Activated naive CD4-positive, alpha-beta T cell treated with anti-CD3 and anti-CD28 coated beads for 36 hours (primary cell): ENCODE measurements at regions of chr2 and their contacts with region 1.

Region 1: GRCh38 chr2:162013514-162014475 is 60.2 kb downstream of the DPP4 start:
- DNase-seq: peak; percentile 31
- H3K4me3 Mint-ChIP-seq: peak overlapping the region; percentile 70
- H3K27ac Mint-ChIP-seq: peak overlapping the region; percentile 95
- H3K4me1 Mint-ChIP-seq: peaks cover 63% of the 10 kb centered on the region
- H3K27me3 Mint-ChIP-seq: no peaks in the 10 kb centered on the region

Region 2: GRCh38 chr2:161308178-161308955 is 705.4 kb before region 1 on chr2 and contains the start of gene PSMD14:
- CTCF ChIA-PET with region 1: no interaction called
- intact Hi-C with region 1: loop called (anchors 5 kb)
- DNase-seq: peak; percentile 96
- H3K4me3 Mint-ChIP-seq: peak within 1 kb of the TSS; percentile 86
- H3K27ac Mint-ChIP-seq: peak within 1 kb of the TSS; percentile 91
- H3K4me1 Mint-ChIP-seq: peaks cover 35% of the 10 kb centered on the region
- H3K27me3 Mint-ChIP-seq: no peaks in the 10 kb centered on the region
- total RNA-seq, gene PSMD14: 76.2 to 79.4 TPM

Region 3: DNA sequence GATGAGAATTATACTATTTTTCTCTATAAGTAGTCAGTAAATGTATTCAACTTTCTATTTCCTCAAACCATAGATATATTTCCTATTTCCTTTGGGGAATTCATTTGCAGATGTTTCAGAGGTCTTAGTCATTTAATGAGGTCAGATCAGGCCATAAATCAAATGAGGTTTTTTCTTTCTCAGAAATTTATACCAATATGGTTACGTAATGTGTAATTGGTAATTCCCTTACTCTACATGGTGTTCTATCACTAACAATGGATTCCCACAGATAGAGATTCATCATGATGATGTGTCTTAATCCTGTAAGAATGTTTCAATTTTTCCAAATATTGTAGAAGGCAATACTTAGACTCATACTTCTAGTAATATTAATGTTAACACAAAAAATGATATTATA is 47.8 kb before region 1 on chr2:
- CTCF ChIA-PET with region 1: no interaction called
- intact Hi-C with region 1: loop called (anchors 1 kb)
- DNase-seq: no peak
- H3K4me3 Mint-ChIP-seq: no peak overlapping the region
- H3K27ac Mint-ChIP-seq: no peak overlapping the region
- H3K4me1 Mint-ChIP-seq: peaks cover 28% of the 10 kb centered on the region
- H3K27me3 Mint-ChIP-seq: no peaks in the 10 kb centered on the region

Region 4: GRCh38 chr2:161976295-161976694 is 37.5 kb before region 1 on chr2:
- CTCF ChIA-PET with region 1: no interaction called
- intact Hi-C with region 1: no loop called
- DNase-seq: no peak
- H3K4me3 Mint-ChIP-seq: no peak overlapping the region
- H3K27ac Mint-ChIP-seq: no peak overlapping the region
- H3K4me1 Mint-ChIP-seq: peaks cover 50% of the 10 kb centered on the region
- H3K27me3 Mint-ChIP-seq: no peaks in the 10 kb centered on the region

Region 5: GRCh38 chr2:161992526-161992925 is 21.3 kb before region 1 on chr2:
- CTCF ChIA-PET with region 1: interaction called, 3 read pairs
- intact Hi-C with region 1: loop called (anchors 1 kb)
- DNase-seq: peak; percentile 80
- H3K4me3 Mint-ChIP-seq: peak overlapping the region; percentile 78
- H3K27ac Mint-ChIP-seq: peak overlapping the region; percentile 97
- H3K4me1 Mint-ChIP-seq: peaks cover 49% of the 10 kb centered on the region
- H3K27me3 Mint-ChIP-seq: no peaks in the 10 kb centered on the region

Region 6: GRCh38 chr2:162025121-162026031 is 11.6 kb after region 1 on chr2:
- CTCF ChIA-PET with region 1: interaction called, 4 read pairs
- intact Hi-C with region 1: loop called (anchors 1 kb)
- DNase-seq: peak; percentile 32
- H3K4me3 Mint-ChIP-seq: no peak overlapping the region
- H3K27ac Mint-ChIP-seq: no peak overlapping the region
- H3K4me1 Mint-ChIP-seq: peaks cover 63% of the 10 kb centered on the region
- H3K27me3 Mint-ChIP-seq: no peaks in the 10 kb centered on the region

Region 7: GRCh38 chr2:162073888-162074645 is 60.3 kb after region 1 on chr2 and contains the start of gene DPP4:
- CTCF ChIA-PET with region 1: interaction called, 6 read pairs
- intact Hi-C with region 1: loop called (anchors 1 kb)
- DNase-seq: peak; percentile 60
- H3K4me3 Mint-ChIP-seq: peak within 1 kb of the TSS; percentile 94
- H3K27ac Mint-ChIP-seq: peak within 1 kb of the TSS; percentile 79
- H3K4me1 Mint-ChIP-seq: peaks cover 48% of the 10 kb centered on the region
- H3K27me3 Mint-ChIP-seq: no peaks in the 10 kb centered on the region
- total RNA-seq, gene DPP4: 11.9 to 12.9 TPM

Region 8: GRCh38 chr2:162301151-162301804 is 287.5 kb after region 1 on chr2:
- CTCF ChIA-PET with region 1: no interaction called
- intact Hi-C with region 1: loop called (anchors 2 kb)
- DNase-seq: peak; percentile 71
- H3K4me3 Mint-ChIP-seq: no peak overlapping the region
- H3K27ac Mint-ChIP-seq: no peak overlapping the region
- H3K4me1 Mint-ChIP-seq: no peaks in the 10 kb centered on the region
- H3K27me3 Mint-ChIP-seq: no peaks in the 10 kb centered on the region